ENCODE measurements at regions of chr1 and their contacts with region 1.

Region 1: GRCh38 chr1:14915356-14916054 is 238.0 kb upstream of the TMEM51 start:
- DNase-seq: peak in 7 of 10 donors; percentile 42 to 68 (median 58)
- H3K4me3 ChIP-seq: no peak overlapping the region
- H3K27ac ChIP-seq: no peak overlapping the region
- H3K27me3 ChIP-seq: no peaks in the 10 kb centered on the region
- CTCF ChIP-seq: peak; percentile 67 to 94 (median 86)

Region 2: DNA sequence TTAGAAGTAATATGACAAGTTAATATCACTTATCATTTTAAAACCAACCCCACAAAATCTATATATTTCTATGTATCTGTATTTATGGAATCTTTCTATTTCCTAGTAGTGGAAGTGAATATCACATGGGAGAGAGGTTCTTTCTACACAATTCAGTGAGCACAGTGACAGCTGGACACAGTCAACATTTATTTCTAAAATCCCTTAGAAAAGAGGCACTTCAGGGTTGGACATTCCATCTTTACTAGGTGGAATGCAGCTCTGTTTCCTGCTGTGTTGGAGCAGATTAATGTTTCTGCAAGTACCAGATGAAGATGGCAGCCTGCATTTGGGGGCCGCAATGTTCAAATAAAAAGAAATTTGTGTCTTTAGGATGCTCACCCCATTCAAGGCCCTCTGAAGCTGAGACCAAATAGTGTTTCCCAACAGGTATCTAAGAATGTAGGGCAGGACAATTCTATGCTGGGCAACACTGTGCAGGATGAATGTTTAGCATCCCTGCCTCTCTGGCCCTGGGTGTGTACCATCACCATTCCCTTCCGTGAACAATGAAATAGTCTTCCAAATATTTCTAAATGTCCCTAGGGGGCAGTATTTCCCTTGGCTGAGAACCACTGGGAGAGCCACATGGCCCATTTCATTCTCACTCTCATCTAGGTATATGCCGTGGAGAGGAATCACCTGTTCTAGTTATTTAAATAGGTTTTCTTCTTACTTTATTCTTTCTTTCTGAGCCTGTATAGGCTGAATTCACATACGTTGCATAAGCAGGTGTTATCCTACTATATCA is 820.7 kb before region 1 on chr1:
- intact Hi-C with region 1: loop called in 1 of 2 experiments (anchors 10 kb)
- DNase-seq: peak in 1 of 10 donors; percentile 29
- H3K4me3 ChIP-seq: no peak overlapping the region
- H3K27ac ChIP-seq: no peak overlapping the region
- H3K27me3 ChIP-seq: no peaks in the 10 kb centered on the region
- CTCF ChIP-seq: peak in 55 of 56 donors; percentile 20 to 69 (median 53)

Region 3: DNA sequence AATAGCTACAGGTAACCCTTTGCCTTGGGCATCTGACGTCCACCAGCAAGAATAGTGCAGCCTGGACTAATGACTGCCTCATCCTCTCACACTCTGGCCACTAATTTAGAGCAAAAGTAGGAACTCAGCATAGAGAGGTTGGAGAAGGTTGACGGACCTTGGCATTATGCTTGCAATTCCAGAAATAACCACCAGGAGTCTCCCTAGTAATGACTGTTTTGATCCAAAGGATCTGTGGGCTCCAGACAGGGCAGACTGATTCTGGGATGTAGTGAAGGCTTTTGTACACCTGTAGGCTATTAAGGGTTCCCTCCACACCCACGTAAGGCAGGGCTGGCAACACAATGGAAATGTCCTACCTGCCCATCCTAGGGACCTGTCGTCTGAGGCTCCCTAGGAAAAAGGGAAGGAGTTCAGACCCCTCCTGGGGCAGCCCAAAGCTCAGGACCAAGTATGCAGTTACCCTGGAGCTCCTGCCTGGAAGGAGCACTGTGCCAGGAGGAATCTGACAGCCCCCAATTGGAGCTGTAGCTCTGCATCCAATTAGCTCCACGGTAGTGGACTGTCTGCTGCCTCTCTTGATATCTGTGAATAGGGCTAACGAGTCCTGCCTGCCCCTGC is 147.1 kb after region 1 on chr1:
- intact Hi-C with region 1: no loop called
- DNase-seq: no peak
- H3K4me3 ChIP-seq: no peak overlapping the region
- H3K27ac ChIP-seq: no peak overlapping the region
- H3K27me3 ChIP-seq: no peaks in the 10 kb centered on the region
- CTCF ChIP-seq: peak in 33 of 56 donors; percentile 6 to 49 (median 22)

Region 4: DNA sequence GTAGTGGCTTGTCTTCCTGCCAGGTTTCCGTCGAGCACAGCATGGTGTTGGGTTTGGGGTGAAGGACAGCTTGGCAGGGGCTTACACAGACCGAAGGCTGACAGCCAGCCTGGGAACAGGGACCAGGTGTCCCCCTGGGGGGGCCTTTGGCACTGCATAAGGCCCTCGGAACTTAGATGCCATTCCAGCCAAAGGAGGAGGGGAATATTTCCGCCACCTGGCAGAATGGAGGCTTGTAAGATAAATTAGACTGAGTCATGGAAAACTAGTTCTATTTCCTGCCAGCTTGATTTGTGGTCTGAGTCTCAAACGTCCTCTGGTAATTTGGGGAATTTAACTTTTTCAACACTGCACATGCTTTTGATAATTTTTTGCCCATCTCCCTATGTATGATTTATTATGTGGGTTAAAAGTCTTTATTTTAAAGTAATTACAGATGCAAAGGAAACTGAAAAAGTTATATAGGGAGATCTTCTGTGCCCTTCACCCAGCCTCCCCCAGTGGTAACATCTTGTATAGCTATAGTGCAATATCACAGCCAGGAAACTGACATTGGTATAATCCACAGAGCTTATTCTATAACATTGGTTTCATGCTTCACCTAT is 226.5 kb after region 1 on chr1:
- intact Hi-C with region 1: no loop called
- DNase-seq: peak in 1 of 10 donors; percentile 95
- H3K4me3 ChIP-seq: no peak overlapping the region
- H3K27ac ChIP-seq: peak overlapping the region in 1 of 59 donors; percentile 37
- H3K27me3 ChIP-seq: no peaks in the 10 kb centered on the region
- CTCF ChIP-seq: no peak

Measured in dorsolateral prefrontal cortex (tissue), 120 donors.